Posterior vena cava (tissue), 2 donors: ENCODE measurements at regions of chr12 and their contacts with region 1.

Region 1: GRCh38 chr12:48795480-48796455 is 6.9 kb upstream of the ADCY6 start:
- DNase-seq: no peak

Region 2: GRCh38 chr12:48758221-48758620 is 37.5 kb before region 1 on chr12:
- intact Hi-C with region 1: loop called (anchors 1 to 2 kb)
- DNase-seq: no peak

Region 3: GRCh38 chr12:49465132-49465531 is 669.4 kb after region 1 on chr12:
- intact Hi-C with region 1: loop called in 1 of 2 experiments (anchors 5 kb)
- DNase-seq: no peak